Dendritic cell treated with granulocyte-macrophage colony-stimulating factor and Interleukin-4, amounts not matched to agents 40 ng/mL and 50 ng/mL, for 4 days (primary cell): ENCODE measurements at regions of chr5 and their contacts with region 1.

Region 1: DNA sequence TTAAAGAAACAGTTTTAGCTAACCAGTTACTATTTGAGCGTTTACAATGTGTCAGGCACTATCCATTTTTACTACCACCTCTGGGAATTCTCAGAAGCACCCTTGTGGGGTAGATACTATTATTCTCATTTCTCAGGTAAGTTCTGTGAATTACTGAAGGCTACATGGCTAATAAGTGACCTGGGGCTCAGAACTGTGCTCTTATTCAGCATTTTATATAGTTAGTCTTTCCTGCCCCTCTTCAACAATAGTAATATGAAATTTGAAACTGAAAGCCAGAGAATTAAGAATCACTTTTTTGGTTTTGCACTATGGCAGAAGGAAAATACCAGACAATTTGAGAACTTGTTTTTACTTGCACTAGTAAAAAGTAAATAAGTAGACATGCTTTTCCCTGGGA is 11.8 kb downstream of the ELL2 start:
- H3K4me3 Mint-ChIP-seq: no peak overlapping the region
- H3K27ac Mint-ChIP-seq: no peak overlapping the region
- H3K4me1 Mint-ChIP-seq: peaks cover 27% of the 10 kb centered on the region
- H3K27me3 Mint-ChIP-seq: no peaks in the 10 kb centered on the region

Region 2: DNA sequence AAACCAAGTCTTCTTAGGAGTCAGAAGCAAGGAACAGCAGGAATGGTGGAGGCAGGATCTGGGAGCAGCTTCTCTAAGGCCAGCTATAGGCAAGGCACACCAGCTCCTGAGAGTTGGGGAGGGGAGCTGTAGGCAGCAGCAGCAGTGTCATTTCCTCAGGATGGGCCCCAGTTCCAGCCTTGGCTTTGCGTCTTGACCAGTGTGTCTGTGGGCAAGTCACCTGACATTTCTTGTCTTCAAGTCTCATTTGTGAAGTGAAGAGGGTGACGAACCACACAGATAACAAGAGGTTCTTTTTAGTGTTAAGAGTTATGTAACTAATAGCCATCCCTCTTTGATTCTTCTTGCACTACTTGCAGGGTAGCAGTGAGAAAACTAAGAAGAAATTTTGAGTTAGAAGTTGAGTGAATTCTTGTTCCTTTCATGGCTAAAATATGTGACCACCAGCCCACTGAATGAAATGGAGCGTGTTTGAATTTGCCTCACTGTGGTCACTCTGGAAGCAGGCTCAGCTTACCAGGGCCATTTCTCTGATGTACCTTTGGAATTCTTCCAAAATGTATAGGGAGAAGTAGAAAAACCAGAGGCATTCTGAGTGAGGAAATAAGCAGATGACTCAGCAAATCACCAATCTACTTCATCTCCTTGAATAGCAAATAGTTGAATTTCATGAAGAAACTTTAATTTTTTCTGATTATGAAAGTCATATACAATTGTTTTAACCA is 176.3 kb before region 1 on chr5:
- intact Hi-C with region 1: no loop called
- H3K4me3 Mint-ChIP-seq: no peak overlapping the region
- H3K27ac Mint-ChIP-seq: peak overlapping the region; percentile 24
- H3K4me1 Mint-ChIP-seq: peaks cover 8% of the 10 kb centered on the region
- H3K27me3 Mint-ChIP-seq: no peaks in the 10 kb centered on the region

Region 3: GRCh38 chr5:95900383-95900958 is 49.3 kb before region 1 on chr5:
- intact Hi-C with region 1: no loop called
- H3K4me3 Mint-ChIP-seq: no peak overlapping the region
- H3K27ac Mint-ChIP-seq: no peak overlapping the region
- H3K4me1 Mint-ChIP-seq: peaks cover 22% of the 10 kb centered on the region
- H3K27me3 Mint-ChIP-seq: no peaks in the 10 kb centered on the region

Region 4: GRCh38 chr5:95915999-95916686 is 33.7 kb before region 1 on chr5:
- intact Hi-C with region 1: loop called (anchors 5 kb)
- H3K4me3 Mint-ChIP-seq: no peak overlapping the region
- H3K27ac Mint-ChIP-seq: no peak overlapping the region
- H3K4me1 Mint-ChIP-seq: peaks cover 28% of the 10 kb centered on the region
- H3K27me3 Mint-ChIP-seq: peaks cover 17% of the 10 kb centered on the region

Region 5: GRCh38 chr5:96094904-96095303 is 145.1 kb after region 1 on chr5:
- intact Hi-C with region 1: no loop called
- H3K4me3 Mint-ChIP-seq: no peak overlapping the region
- H3K27ac Mint-ChIP-seq: no peak overlapping the region
- H3K4me1 Mint-ChIP-seq: no peaks in the 10 kb centered on the region
- H3K27me3 Mint-ChIP-seq: no peaks in the 10 kb centered on the region